Right lobe of liver (tissue), 6 donors: ENCODE measurements at regions of chr19 and their contacts with region 1.

Region 1: DNA sequence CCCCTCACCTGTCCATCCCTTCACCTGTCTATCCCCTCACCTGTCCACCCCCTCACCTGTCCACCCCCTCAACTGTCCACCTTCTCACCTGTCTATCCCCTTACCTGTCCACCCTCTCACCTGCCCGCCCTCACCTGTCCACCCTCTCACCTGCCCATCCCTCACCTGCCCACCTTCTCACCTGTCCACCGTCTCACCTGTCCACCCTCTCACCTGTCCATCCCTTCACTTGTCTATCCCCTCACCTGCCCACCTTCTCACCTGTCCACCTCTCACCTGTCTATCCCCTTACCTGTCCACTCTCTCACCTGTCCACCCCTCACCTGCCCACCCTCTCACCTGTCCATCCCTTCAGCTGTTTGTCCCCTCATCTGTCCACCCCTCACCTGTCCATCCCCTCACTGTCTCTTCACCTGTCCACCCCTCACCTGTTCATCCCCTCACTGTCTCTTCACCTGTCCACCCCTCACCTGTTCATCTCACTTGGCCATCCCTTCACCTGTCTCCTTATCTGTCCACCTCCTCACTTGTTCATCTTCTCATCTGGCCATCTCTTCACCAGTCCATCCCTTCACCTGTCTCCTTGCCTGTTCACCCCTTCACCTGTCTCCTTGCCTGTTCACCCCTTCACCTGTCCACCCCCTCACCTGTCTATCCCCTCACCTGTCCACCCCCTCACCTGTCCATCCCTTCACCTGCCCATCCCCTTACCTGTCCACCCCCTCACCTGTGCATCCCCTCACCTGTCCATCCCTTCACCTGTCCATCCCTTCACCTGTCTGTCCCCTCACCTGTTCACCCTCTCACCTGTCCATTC is 12.7 kb upstream of the KANK2 start:
- DNase-seq: no peak
- ATAC-seq: no peak
- H3K4me3 ChIP-seq: no peak overlapping the region
- H3K27ac ChIP-seq: no peak overlapping the region
- H3K4me1 ChIP-seq: peaks cover 0 to 4% (median 2%) of the 10 kb centered on the region in 4 donors
- H3K27me3 ChIP-seq: no peaks in the 10 kb centered on the region
- CTCF ChIP-seq: no peak
- POLR2A ChIP-seq: no peak

Region 2: GRCh38 chr19:10936661-10937084 is 273.4 kb before region 1 on chr19:
- intact Hi-C with region 1: loop called in 1 of 2 experiments (anchors 10 kb)
- DNase-seq: no peak
- ATAC-seq: peak; percentile 77 to 83 (median 80)
- H3K4me3 ChIP-seq: no peak overlapping the region
- H3K27ac ChIP-seq: no peak overlapping the region
- H3K4me1 ChIP-seq: peaks cover 0 to 20% (median 0%) of the 10 kb centered on the region in 4 donors
- H3K27me3 ChIP-seq: no peaks in the 10 kb centered on the region
- CTCF ChIP-seq: peak; percentile 61 to 66 (median 62)
- POLR2A ChIP-seq: no peak

Region 3: GRCh38 chr19:11035441-11036377 is 174.3 kb before region 1 on chr19:
- intact Hi-C with region 1: loop called in 1 of 2 experiments (anchors 10 kb)
- DNase-seq: peak; percentile 92 to 93 (median 93)
- ATAC-seq: peak; percentile 97 to 99 (median 98)
- H3K4me3 ChIP-seq: no peak overlapping the region
- H3K27ac ChIP-seq: no peak overlapping the region
- H3K4me1 ChIP-seq: no peaks in the 10 kb centered on the region
- H3K27me3 ChIP-seq: no peaks in the 10 kb centered on the region
- CTCF ChIP-seq: peak; percentile 85 to 92 (median 90)
- POLR2A ChIP-seq: no peak

Region 4: GRCh38 chr19:11355160-11356073 is 145.4 kb after region 1 on chr19 and contains the start of gene PLPPR2:
- intact Hi-C with region 1: no loop called
- DNase-seq: peak; percentile 92 to 94 (median 93)
- ATAC-seq: peak; percentile 94 to 98 (median 95)
- H3K4me3 ChIP-seq: peak within 1 kb of the TSS; percentile 48 to 53 (median 50)
- H3K27ac ChIP-seq: peak within 1 kb of the TSS in 1 of 3 donors; percentile 8
- H3K4me1 ChIP-seq: peaks cover 0 to 5% (median 0%) of the 10 kb centered on the region in 4 donors
- H3K27me3 ChIP-seq: no peaks in the 10 kb centered on the region
- CTCF ChIP-seq: no peak
- POLR2A ChIP-seq: peak; percentile 71
- total RNA-seq, gene PLPPR2: 6.7 to 17.5 (median 10.2) TPM

Region 5: DNA sequence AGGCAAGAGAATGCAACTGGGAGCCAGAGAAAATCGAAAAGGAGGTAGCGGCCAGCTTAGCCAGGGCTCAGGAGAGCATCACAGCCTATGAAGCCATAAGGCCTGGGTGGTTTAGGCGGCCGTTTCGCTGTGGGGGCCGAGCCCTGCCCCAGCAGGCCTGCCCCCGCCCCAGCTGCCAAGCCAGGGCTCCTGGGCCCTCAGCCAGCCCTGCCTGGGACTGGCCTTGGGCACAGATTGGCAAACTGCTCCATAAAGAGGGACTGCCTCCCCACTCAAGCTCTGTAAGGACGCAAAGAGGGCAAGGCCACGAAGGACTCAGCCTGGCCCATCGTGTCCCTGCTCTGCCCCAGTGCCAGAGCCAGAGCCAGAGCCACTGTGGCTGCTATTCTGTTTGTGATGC is 285.4 kb after region 1 on chr19:
- intact Hi-C with region 1: no loop called
- DNase-seq: no peak
- ATAC-seq: no peak
- H3K4me3 ChIP-seq: no peak overlapping the region
- H3K27ac ChIP-seq: no peak overlapping the region
- H3K4me1 ChIP-seq: peaks cover 0 to 8% (median 3%) of the 10 kb centered on the region in 4 donors
- H3K27me3 ChIP-seq: no peaks in the 10 kb centered on the region
- CTCF ChIP-seq: no peak
- POLR2A ChIP-seq: no peak